Heart right ventricle (tissue), 16 donors: ENCODE measurements at regions of chr5 and their contacts with region 1.

Region 1: GRCh38 chr5:75660678-75661465 is 49.6 kb downstream of the ANKDD1B start:
- DNase-seq: no peak
- ATAC-seq: peak in 3 of 8 donors; percentile 38 to 58 (median 47)
- H3K4me3 ChIP-seq: no peak overlapping the region
- H3K27ac ChIP-seq: peak overlapping the region in 1 of 10 donors; percentile 32
- H3K4me1 ChIP-seq: peaks cover 0 to 3% (median 0%) of the 10 kb centered on the region in 9 donors
- H3K27me3 ChIP-seq: no peaks in the 10 kb centered on the region
- CTCF ChIP-seq: no peak

Region 2: GRCh38 chr5:73748510-73749400 is 1912.1 kb before region 1 on chr5:
- intact Hi-C with region 1: loop called in 1 of 10 experiments (anchors 5 kb)
- DNase-seq: peak; percentile 58 to 60
- ATAC-seq: peak; percentile 44 to 86 (median 74)
- H3K4me3 ChIP-seq: peak overlapping the region in 5 of 10 donors; percentile 3 to 21 (median 7)
- H3K27ac ChIP-seq: peak overlapping the region in 9 of 10 donors; percentile 22 to 77 (median 49)
- H3K4me1 ChIP-seq: peaks cover 0 to 33% (median 18%) of the 10 kb centered on the region in 9 donors
- H3K27me3 ChIP-seq: no peaks in the 10 kb centered on the region
- CTCF ChIP-seq: no peak

Region 3: DNA sequence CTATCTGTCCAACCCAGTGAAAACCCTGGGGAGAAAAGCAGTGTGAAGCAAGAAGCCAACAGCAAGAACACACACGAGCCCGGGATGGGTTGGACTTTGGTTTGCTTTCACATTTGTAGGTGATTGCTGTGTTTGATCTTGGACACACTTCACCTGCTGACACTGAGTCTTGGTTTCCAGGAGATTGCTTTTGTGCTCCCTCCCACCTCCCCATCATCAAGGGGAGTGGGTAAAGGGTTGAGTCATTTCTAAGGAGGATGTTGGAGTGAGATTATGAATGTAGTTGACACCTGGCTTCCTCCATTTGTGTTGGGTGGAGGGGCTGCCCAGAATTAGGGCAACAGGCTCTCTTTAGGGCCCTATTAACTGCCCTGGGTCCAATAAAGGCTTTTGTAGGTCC is 12.2 kb before region 1 on chr5:
- intact Hi-C with region 1: no loop called
- DNase-seq: no peak
- ATAC-seq: no peak
- H3K4me3 ChIP-seq: no peak overlapping the region
- H3K27ac ChIP-seq: no peak overlapping the region
- H3K4me1 ChIP-seq: peaks cover 0 to 4% (median 0%) of the 10 kb centered on the region in 9 donors
- H3K27me3 ChIP-seq: no peaks in the 10 kb centered on the region
- CTCF ChIP-seq: no peak

Region 4: GRCh38 chr5:75701856-75702255 is 41.0 kb after region 1 on chr5:
- intact Hi-C with region 1: no loop called
- DNase-seq: peak in 1 of 2 donors; percentile 43
- ATAC-seq: peak in 6 of 8 donors; percentile 28 to 97 (median 81)
- H3K4me3 ChIP-seq: no peak overlapping the region
- H3K27ac ChIP-seq: no peak overlapping the region
- H3K4me1 ChIP-seq: no peaks in the 10 kb centered on the region
- H3K27me3 ChIP-seq: no peaks in the 10 kb centered on the region
- CTCF ChIP-seq: no peak